ENCODE measurements at regions of chr17 and their contacts with region 1.

Region 1: GRCh38 chr17:29369831-29370735 is 20.1 kb upstream of the TAOK1 start:
- DNase-seq: peak; percentile 66 to 76
- H3K4me3 ChIP-seq: no peak overlapping the region
- H3K27ac ChIP-seq: no peak overlapping the region
- H3K4me1 ChIP-seq: no peaks in the 10 kb centered on the region
- H3K27me3 ChIP-seq: no peaks in the 10 kb centered on the region
- CTCF ChIP-seq: peak; percentile 71 to 88

Region 2: DNA sequence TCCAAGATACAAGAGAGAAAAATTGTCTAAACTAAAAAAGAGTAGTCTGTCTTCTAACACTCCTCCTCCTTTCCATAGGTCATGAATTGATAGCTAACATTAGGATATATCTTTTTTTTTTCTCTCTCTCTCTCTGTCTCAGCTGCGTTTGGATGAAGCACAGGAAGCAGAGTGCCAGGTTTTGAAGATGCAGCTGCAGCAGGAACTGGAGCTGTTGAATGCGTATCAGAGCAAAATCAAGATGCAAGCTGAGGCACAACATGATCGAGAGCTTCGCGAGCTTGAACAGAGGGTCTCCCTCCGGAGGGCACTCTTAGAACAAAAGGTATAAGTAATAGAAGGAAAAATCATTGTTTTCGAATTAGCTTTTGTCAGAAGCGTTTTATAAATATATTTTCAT is 163.9 kb after region 1 on chr17:
- intact Hi-C with region 1: loop called (anchors 2 kb)
- DNase-seq: no peak
- H3K4me3 ChIP-seq: no peak overlapping the region
- H3K27ac ChIP-seq: no peak overlapping the region
- H3K4me1 ChIP-seq: no peaks in the 10 kb centered on the region
- H3K27me3 ChIP-seq: no peaks in the 10 kb centered on the region
- CTCF ChIP-seq: no peak

Region 3: DNA sequence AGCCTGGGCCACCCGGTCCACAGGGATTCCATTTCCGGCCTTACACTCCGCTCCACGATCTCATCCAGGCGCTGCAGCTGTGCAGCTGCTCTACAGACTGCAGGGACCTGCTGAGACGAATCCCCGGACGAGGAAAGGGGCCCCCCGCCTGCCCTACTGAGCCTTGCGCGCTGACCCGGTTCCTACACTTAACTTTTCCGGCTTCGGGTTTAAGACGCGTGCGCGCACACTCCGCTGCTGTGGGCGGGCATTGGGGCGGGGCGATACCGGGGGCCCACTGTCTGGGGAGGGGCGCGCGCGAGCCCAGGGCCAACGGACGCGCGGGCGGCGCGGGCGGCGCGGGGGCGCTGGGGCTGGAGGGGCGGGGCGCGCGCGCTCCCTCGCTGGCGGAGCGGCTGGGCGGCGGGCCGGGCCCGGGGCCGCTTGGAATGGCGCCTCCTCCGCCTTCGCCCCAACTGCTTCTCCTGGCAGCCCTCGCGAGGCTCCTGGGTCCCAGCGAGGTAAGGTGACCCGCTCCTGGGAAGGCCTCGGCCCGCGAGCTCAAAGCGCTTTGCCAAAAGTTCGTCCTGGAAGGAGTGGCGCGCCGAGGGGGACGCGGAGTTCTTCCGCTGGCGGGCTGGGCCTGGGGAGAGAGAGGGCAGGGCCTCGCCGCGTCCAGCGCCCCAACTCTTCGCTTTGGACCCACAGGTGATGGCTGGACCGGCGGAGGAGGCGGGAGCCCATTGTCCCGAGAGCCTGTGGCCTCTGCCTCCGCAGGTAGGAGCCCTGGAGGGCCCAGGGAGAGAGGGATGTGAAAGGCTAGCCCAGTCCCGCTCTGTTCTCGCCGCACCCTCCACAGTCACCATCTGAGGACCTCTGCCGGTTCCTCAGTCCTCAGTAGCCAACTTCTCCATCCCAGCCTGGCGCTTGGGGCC is 198.5 kb after region 1 on chr17 and contains the start of gene TP53I13:
- intact Hi-C with region 1: loop called (anchors 10 kb)
- DNase-seq: peak; percentile 84 to 92
- H3K4me3 ChIP-seq: peak within 1 kb of the TSS; percentile 72 to 90
- H3K27ac ChIP-seq: peak within 1 kb of the TSS; percentile 87 to 89
- H3K4me1 ChIP-seq: peaks cover 0 to 65% (median 38%) of the 10 kb centered on the region in 4 donors
- H3K27me3 ChIP-seq: no peaks in the 10 kb centered on the region
- CTCF ChIP-seq: no peak

Measured in tibial artery (tissue), 4 donors.